Caco-2 (cell line): ENCODE measurements at regions of chr7 and their contacts with region 1.

Region 1: DNA sequence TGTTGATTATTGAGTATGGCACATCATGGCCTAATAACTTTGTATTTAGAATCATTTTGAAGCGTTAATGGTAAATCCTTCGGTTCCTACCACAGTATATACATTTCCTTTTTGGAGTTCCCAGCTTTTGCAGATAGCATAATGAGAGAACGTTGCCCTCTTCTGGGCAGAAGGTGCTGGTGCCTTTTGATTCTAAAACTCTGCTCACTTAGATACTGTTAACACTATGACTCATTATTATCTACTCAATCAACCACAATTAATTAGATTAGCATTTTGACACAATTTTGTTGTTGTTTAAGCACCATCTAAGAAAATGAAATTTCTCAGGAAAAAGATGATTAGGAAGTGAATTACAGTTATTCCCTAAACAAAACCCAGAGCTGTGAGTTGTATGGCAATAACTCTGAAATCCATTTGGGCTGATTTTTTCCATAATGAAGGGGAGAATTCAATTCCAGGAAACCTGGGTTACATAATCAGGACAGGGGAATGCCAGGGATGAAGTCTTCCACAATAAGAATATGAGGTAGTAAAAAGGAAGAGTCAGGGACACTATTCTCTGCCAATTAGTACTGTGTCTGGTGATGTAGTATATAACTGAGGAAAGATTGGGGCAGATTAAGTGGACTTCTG is 11.5 kb upstream of the DLD start:
- DNase-seq: peak in 1 of 2 experiments; percentile 52
- H3K4me3 ChIP-seq: no peak overlapping the region
- H3K4me3 Mint-ChIP-seq: no peak overlapping the region
- H3K27ac Mint-ChIP-seq: no peak overlapping the region
- H3K4me1 ChIP-seq: no peaks in the 10 kb centered on the region
- H3K4me1 Mint-ChIP-seq: peaks cover 20% of the 10 kb centered on the region
- H3K27me3 ChIP-seq: no peaks in the 10 kb centered on the region
- H3K27me3 Mint-ChIP-seq: peaks cover 2% of the 10 kb centered on the region
- CTCF ChIP-seq: peak; percentile 68 to 87

Region 2: DNA sequence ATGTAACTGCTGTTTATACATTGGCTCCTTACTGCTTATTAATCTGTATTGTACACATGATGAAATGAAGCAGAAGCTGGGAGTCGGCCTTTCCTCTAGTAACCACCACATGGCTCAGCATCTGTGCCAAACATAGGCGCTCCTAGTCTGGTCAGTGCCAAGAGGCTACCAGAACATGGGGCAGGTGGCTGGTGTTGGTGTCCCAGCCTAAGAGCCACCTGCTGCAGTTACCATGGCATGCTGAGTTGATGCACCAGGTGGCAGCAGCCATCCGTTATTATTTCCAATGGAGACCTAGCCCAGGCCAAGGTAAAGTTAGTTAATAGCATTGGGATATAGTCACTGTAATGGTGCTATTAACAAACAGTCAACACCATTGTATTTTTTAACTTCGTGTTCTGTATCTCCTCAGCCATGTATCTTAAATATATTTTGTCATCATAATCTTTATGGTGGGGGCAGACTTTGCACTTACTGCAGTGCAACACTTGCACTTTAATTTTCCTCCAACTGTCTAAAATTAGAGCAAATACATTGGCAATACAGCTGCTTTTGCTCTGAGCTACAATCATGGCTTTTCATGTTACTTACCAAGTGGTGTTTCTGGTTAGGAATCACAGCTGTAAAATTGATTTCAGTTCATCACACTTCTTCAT is 677.6 kb before region 1 on chr7:
- CTCF ChIA-PET with region 1: interaction called, 3 read pairs
- POLR2A ChIA-PET with region 1: no interaction called
- intact Hi-C with region 1: loop called (anchors 1 kb)
- DNase-seq: peak; percentile 46 to 53
- H3K4me3 ChIP-seq: no peak overlapping the region
- H3K4me3 Mint-ChIP-seq: no peak overlapping the region
- H3K27ac Mint-ChIP-seq: no peak overlapping the region
- H3K4me1 ChIP-seq: no peaks in the 10 kb centered on the region
- H3K4me1 Mint-ChIP-seq: peaks cover 11% of the 10 kb centered on the region
- H3K27me3 ChIP-seq: no peaks in the 10 kb centered on the region
- H3K27me3 Mint-ChIP-seq: no peaks in the 10 kb centered on the region
- CTCF ChIP-seq: peak; percentile 39 to 66

Region 3: GRCh38 chr7:107579885-107580715 is 299.4 kb before region 1 on chr7 and contains the start of gene BCAP29:
- CTCF ChIA-PET with region 1: interaction called, 4 read pairs
- POLR2A ChIA-PET with region 1: interaction called, 3 read pairs
- intact Hi-C with region 1: loop called (anchors 1 kb)
- DNase-seq: peak; percentile 88 to 91
- H3K4me3 ChIP-seq: peak within 1 kb of the TSS; percentile 79
- H3K4me3 Mint-ChIP-seq: peak within 1 kb of the TSS; percentile 90
- H3K27ac Mint-ChIP-seq: peak within 1 kb of the TSS; percentile 94
- H3K4me1 ChIP-seq: peaks cover 9% of the 10 kb centered on the region
- H3K4me1 Mint-ChIP-seq: peaks cover 7% of the 10 kb centered on the region
- H3K27me3 ChIP-seq: no peaks in the 10 kb centered on the region
- H3K27me3 Mint-ChIP-seq: no peaks in the 10 kb centered on the region
- CTCF ChIP-seq: peak; percentile 14 to 55
- total RNA-seq, gene BCAP29: 30.4 and 35.3 TPM in 2 replicates

Region 4: GRCh38 chr7:107691716-107692115 is 187.8 kb before region 1 on chr7:
- CTCF ChIA-PET with region 1: no interaction called
- POLR2A ChIA-PET with region 1: no interaction called
- intact Hi-C with region 1: no loop called
- DNase-seq: no peak
- H3K4me3 ChIP-seq: no peak overlapping the region
- H3K4me3 Mint-ChIP-seq: no peak overlapping the region
- H3K27ac Mint-ChIP-seq: no peak overlapping the region
- H3K4me1 ChIP-seq: no peaks in the 10 kb centered on the region
- H3K4me1 Mint-ChIP-seq: no peaks in the 10 kb centered on the region
- H3K27me3 ChIP-seq: peaks cover 2% of the 10 kb centered on the region; the same call in 1 of the 2 replicates
- H3K27me3 Mint-ChIP-seq: peaks cover 23% of the 10 kb centered on the region
- CTCF ChIP-seq: no peak

Region 5: DNA sequence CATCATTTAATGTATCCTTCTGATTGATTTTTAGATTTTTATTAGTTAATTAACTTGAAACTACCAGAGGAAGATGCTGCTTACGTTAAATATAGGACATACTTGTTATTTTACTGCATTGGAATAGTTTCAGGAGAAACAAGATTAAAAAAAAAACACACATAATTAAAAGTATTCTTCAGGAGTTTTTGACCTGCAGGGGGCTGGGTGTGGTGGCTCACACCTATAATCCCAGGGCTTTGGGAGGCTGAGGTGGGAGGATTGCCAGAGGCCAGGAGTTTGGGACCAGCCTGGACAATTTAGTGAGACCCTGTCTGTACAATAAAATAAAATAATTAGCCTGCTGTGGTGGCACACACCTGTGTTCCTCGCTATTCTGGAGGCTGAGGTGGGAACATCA is 124.9 kb before region 1 on chr7:
- CTCF ChIA-PET with region 1: interaction called, 5 read pairs
- POLR2A ChIA-PET with region 1: no interaction called
- intact Hi-C with region 1: loop called (anchors 2 kb)
- DNase-seq: peak in 1 of 2 experiments; percentile 29
- H3K4me3 ChIP-seq: no peak overlapping the region
- H3K4me3 Mint-ChIP-seq: no peak overlapping the region
- H3K27ac Mint-ChIP-seq: no peak overlapping the region
- H3K4me1 ChIP-seq: no peaks in the 10 kb centered on the region
- H3K4me1 Mint-ChIP-seq: no peaks in the 10 kb centered on the region
- H3K27me3 ChIP-seq: no peaks in the 10 kb centered on the region
- H3K27me3 Mint-ChIP-seq: no peaks in the 10 kb centered on the region
- CTCF ChIP-seq: peak; percentile 2 to 27

Region 6: GRCh38 chr7:108063520-108063933 is 184.0 kb after region 1 on chr7:
- CTCF ChIA-PET with region 1: no interaction called
- POLR2A ChIA-PET with region 1: no interaction called
- intact Hi-C with region 1: no loop called
- DNase-seq: peak in 1 of 2 experiments; percentile 8
- H3K4me3 ChIP-seq: no peak overlapping the region
- H3K4me3 Mint-ChIP-seq: no peak overlapping the region
- H3K27ac Mint-ChIP-seq: no peak overlapping the region
- H3K4me1 ChIP-seq: peaks cover 5% of the 10 kb centered on the region
- H3K4me1 Mint-ChIP-seq: peaks cover 7% of the 10 kb centered on the region
- H3K27me3 ChIP-seq: no peaks in the 10 kb centered on the region
- H3K27me3 Mint-ChIP-seq: no peaks in the 10 kb centered on the region
- CTCF ChIP-seq: peak in 1 of 2 experiments; percentile 9

Region 7: GRCh38 chr7:108146070-108146837 is 266.7 kb after region 1 on chr7:
- CTCF ChIA-PET with region 1: interaction called, 6 read pairs
- POLR2A ChIA-PET with region 1: no interaction called
- intact Hi-C with region 1: loop called (anchors 5 kb)
- DNase-seq: peak; percentile 81 to 82
- H3K4me3 ChIP-seq: no peak overlapping the region
- H3K4me3 Mint-ChIP-seq: no peak overlapping the region
- H3K27ac Mint-ChIP-seq: no peak overlapping the region
- H3K4me1 ChIP-seq: peaks cover 16% of the 10 kb centered on the region
- H3K4me1 Mint-ChIP-seq: peaks cover 15% of the 10 kb centered on the region
- H3K27me3 ChIP-seq: no peaks in the 10 kb centered on the region
- H3K27me3 Mint-ChIP-seq: no peaks in the 10 kb centered on the region
- CTCF ChIP-seq: peak; percentile 93 to 97